ENCODE measurements at regions of chr7 and their contacts with region 1.

Region 1: DNA sequence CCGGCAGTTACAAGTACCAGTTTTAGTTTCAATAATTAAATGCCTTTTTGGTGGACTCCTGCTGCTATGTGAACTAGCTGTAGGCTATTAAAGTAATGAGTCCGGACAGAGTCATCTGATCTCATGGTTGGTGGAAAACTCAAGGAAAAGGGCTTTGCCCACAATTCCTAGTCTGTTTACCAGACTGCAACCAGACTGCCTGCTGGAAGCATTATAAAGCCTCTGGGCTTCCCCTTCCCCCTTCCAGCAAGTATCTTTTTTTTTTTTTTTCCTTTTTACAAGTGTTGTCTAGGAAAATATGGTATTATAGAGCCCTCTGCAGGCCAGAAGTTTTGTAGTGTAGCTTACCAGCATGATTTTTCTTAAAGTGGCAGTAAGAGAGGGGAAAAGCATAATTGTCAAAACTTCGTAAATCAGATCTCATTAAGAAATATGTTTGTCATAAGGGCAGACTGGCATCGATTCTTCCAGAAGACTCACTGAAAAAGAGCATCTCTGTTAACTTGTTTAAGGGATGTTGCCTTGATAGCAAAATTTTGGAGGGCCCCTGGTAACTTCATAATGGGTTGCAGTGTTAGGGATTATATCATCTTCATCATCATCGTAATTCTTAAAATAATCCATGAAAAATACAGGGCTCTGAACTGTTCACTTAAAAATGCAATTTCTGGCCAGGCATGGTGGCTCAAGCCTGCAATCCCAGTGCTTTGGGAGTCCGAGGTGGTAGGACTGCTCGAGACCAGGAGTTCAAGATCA is 181.3 kb downstream of the TAX1BP1 start:
- DNase-seq: peak; percentile 70
- H3K4me3 Mint-ChIP-seq: no peak overlapping the region
- H3K27ac Mint-ChIP-seq: no peak overlapping the region
- H3K4me1 Mint-ChIP-seq: peaks cover 38% of the 10 kb centered on the region
- H3K27me3 Mint-ChIP-seq: no peaks in the 10 kb centered on the region
- CTCF ChIP-seq: peak; percentile 52

Region 2: DNA sequence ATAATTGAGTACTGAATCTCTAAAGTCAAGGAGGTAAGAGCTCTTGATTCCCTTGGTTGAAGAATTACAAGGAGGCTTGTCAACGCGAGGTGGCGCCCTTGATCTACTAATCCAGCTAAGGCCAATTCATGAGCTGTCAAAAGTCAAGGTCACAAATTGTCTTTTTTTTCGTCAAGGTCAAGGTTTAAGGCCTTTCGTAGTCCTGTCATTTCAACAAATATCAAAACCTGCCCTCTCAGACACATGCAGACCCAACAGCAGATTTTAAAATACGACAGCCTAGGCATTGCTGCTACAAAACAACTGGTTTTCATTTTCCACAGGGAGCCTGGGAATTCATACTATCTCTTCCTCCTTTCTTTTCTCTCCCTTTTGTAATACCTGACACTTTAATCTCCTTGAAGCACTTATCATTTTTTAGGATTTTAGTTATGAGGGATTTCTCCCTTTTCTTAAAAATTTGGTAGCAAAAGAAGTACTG is 724.9 kb before region 1 on chr7:
- CTCF ChIA-PET with region 1: interaction called, 13 read pairs
- intact Hi-C with region 1: loop called (anchors 2 kb)
- DNase-seq: peak; percentile 89
- H3K4me3 Mint-ChIP-seq: no peak overlapping the region
- H3K27ac Mint-ChIP-seq: no peak overlapping the region
- H3K4me1 Mint-ChIP-seq: peaks cover 10% of the 10 kb centered on the region
- H3K27me3 Mint-ChIP-seq: peaks cover 40% of the 10 kb centered on the region
- CTCF ChIP-seq: peak; percentile 93

Region 3: GRCh38 chr7:27576360-27576944 is 344.8 kb before region 1 on chr7:
- CTCF ChIA-PET with region 1: no interaction called
- intact Hi-C with region 1: loop called (anchors 5 kb)
- DNase-seq: peak; percentile 34
- H3K4me3 Mint-ChIP-seq: no peak overlapping the region
- H3K27ac Mint-ChIP-seq: no peak overlapping the region
- H3K4me1 Mint-ChIP-seq: peaks cover 15% of the 10 kb centered on the region
- H3K27me3 Mint-ChIP-seq: no peaks in the 10 kb centered on the region
- CTCF ChIP-seq: peak; percentile 42

Region 4: GRCh38 chr7:27605689-27606269 is 315.5 kb before region 1 on chr7:
- CTCF ChIA-PET with region 1: interaction called, 11 read pairs
- intact Hi-C with region 1: loop called (anchors 10 kb)
- DNase-seq: peak; percentile 35
- H3K4me3 Mint-ChIP-seq: peak overlapping the region; percentile 9
- H3K27ac Mint-ChIP-seq: peak overlapping the region; percentile 55
- H3K4me1 Mint-ChIP-seq: peaks cover 26% of the 10 kb centered on the region
- H3K27me3 Mint-ChIP-seq: no peaks in the 10 kb centered on the region
- CTCF ChIP-seq: peak; percentile 62

Region 5: GRCh38 chr7:27640914-27641580 is 280.2 kb before region 1 on chr7:
- CTCF ChIA-PET with region 1: interaction called, 3 read pairs
- intact Hi-C with region 1: loop called (anchors 5 kb)
- DNase-seq: peak; percentile 88
- H3K4me3 Mint-ChIP-seq: peak overlapping the region; percentile 50
- H3K27ac Mint-ChIP-seq: peak overlapping the region; percentile 76
- H3K4me1 Mint-ChIP-seq: peaks cover 68% of the 10 kb centered on the region
- H3K27me3 Mint-ChIP-seq: no peaks in the 10 kb centered on the region
- CTCF ChIP-seq: no peak

Region 6: DNA sequence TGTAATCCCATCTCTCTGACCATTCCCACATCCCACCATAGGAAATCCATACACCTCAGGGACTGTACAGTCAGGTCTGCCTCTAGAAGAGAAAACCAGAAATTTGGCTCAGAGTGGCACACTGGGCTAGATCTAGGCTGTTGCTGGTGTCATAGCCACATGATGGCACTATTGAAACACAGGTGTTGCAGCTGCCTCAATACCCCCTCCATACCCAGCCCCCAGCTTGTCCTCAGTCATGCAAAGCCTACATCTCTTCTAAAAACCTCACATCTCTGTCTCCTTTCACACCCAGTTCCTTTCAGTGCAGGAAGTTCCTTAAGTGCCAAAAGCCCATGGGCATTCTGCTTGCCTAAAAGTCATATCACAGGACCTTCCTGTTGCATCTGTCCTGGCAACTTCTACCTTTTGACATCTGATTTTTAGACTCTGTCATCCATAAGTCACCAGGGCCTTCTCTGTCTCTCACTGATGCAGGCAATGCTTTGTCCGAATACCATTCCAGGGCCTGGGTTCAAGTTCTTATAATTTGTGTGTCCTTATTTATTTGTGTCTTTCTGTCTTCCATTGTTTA is 231.6 kb before region 1 on chr7:
- CTCF ChIA-PET with region 1: interaction called, 12 read pairs
- intact Hi-C with region 1: loop called (anchors 1 kb)
- DNase-seq: peak; percentile 69
- H3K4me3 Mint-ChIP-seq: no peak overlapping the region
- H3K27ac Mint-ChIP-seq: no peak overlapping the region
- H3K4me1 Mint-ChIP-seq: peaks cover 26% of the 10 kb centered on the region
- H3K27me3 Mint-ChIP-seq: no peaks in the 10 kb centered on the region
- CTCF ChIP-seq: peak; percentile 74

Region 7: GRCh38 chr7:27745064-27745583 is 176.1 kb before region 1 on chr7:
- CTCF ChIA-PET with region 1: interaction called, 9 read pairs
- intact Hi-C with region 1: loop called (anchors 1 kb)
- DNase-seq: peak; percentile 46
- H3K4me3 Mint-ChIP-seq: peak overlapping the region; percentile 46
- H3K27ac Mint-ChIP-seq: peak overlapping the region; percentile 74
- H3K4me1 Mint-ChIP-seq: peaks cover 52% of the 10 kb centered on the region
- H3K27me3 Mint-ChIP-seq: no peaks in the 10 kb centered on the region
- CTCF ChIP-seq: peak; percentile 66

Region 8: DNA sequence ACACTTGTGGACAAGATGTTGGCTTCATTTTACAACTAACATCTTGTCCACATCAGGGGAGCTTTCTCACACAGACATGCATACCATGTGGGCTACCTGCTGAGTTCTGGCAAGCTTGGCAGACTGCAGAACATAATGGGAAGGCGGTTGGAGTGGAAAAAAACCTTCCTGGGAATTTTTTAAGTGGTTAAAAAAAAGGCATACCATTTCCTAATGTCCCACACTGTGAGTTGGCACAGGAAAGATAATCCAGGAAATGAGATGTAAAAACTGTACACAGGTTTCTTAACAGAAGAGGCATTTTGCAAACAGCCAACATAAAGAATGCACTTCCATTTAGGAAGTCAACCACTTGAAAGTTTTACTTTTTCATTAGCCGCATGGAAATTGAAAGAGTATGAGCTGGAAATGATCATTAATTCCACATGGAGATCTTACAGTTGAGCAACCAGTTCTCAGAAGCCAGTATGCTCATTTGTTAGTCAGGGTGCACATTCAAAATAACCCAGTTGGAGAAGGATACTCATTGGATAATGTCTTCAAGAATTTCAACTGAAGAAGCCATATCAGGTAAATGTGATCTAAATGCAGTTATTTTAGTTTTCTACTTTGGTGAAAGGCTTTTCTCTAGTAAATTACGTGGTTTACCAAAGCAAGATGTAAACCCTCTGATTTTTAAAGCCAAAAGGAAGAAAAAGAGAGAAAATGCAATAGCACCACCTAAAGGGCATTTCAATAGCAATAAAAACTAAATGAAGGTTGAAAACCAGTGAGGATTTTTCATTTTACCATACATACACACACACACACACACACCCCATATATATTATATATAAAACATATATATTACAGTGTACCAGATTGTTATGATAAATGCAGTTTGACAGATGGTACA is 12.7 kb after region 1 on chr7:
- CTCF ChIA-PET with region 1: no interaction called
- intact Hi-C with region 1: no loop called
- DNase-seq: no peak
- H3K4me3 Mint-ChIP-seq: no peak overlapping the region
- H3K27ac Mint-ChIP-seq: no peak overlapping the region
- H3K4me1 Mint-ChIP-seq: no peaks in the 10 kb centered on the region
- H3K27me3 Mint-ChIP-seq: no peaks in the 10 kb centered on the region
- CTCF ChIP-seq: peak; percentile 60

Measured in Calu3 (cell line).